ENCODE measurements at regions of chr12 and their contacts with region 1.

Region 1: GRCh38 chr12:96489103-96490056 is at the start of gene CFAP54:
- DNase-seq: peak; percentile 96
- H3K4me3 Mint-ChIP-seq: peak within 1 kb of the TSS; percentile 80
- H3K27ac Mint-ChIP-seq: peak within 1 kb of the TSS; percentile 7
- H3K4me1 Mint-ChIP-seq: peaks cover 49% of the 10 kb centered on the region
- H3K27me3 Mint-ChIP-seq: peaks cover 16% of the 10 kb centered on the region
- total RNA-seq, gene CFAP54: 0.55 to 0.75 TPM

Region 2: GRCh38 chr12:96392397-96392796 is 97.0 kb before region 1 on chr12:
- CTCF ChIA-PET with region 1: no interaction called
- POLR2A ChIA-PET with region 1: no interaction called
- DNase-seq: no peak
- H3K4me3 Mint-ChIP-seq: no peak overlapping the region
- H3K27ac Mint-ChIP-seq: no peak overlapping the region
- H3K4me1 Mint-ChIP-seq: peaks cover 39% of the 10 kb centered on the region
- H3K27me3 Mint-ChIP-seq: no peaks in the 10 kb centered on the region

Region 3: GRCh38 chr12:96445691-96446583 is 43.4 kb before region 1 on chr12:
- CTCF ChIA-PET with region 1: interaction called, 13 read pairs
- POLR2A ChIA-PET with region 1: interaction called, 9 read pairs
- DNase-seq: peak; percentile 75
- H3K4me3 Mint-ChIP-seq: peak overlapping the region; percentile 49
- H3K27ac Mint-ChIP-seq: peak overlapping the region; percentile 95
- H3K4me1 Mint-ChIP-seq: peaks cover 52% of the 10 kb centered on the region
- H3K27me3 Mint-ChIP-seq: peaks cover 3% of the 10 kb centered on the region

Region 4: GRCh38 chr12:96501139-96501761 is 11.9 kb after region 1 on chr12:
- CTCF ChIA-PET with region 1: interaction called, 29 read pairs
- POLR2A ChIA-PET with region 1: interaction called, 4 read pairs
- DNase-seq: peak; percentile 57
- H3K4me3 Mint-ChIP-seq: peak overlapping the region; percentile 25
- H3K27ac Mint-ChIP-seq: peak overlapping the region; percentile 89
- H3K4me1 Mint-ChIP-seq: peaks cover 54% of the 10 kb centered on the region
- H3K27me3 Mint-ChIP-seq: no peaks in the 10 kb centered on the region

Region 5: GRCh38 chr12:96548384-96548783 is 59.0 kb after region 1 on chr12:
- CTCF ChIA-PET with region 1: no interaction called
- POLR2A ChIA-PET with region 1: no interaction called
- DNase-seq: no peak
- H3K4me3 Mint-ChIP-seq: no peak overlapping the region
- H3K27ac Mint-ChIP-seq: no peak overlapping the region
- H3K4me1 Mint-ChIP-seq: no peaks in the 10 kb centered on the region
- H3K27me3 Mint-ChIP-seq: peaks cover 3% of the 10 kb centered on the region

Region 6: GRCh38 chr12:96882862-96883261 is 393.5 kb after region 1 on chr12:
- CTCF ChIA-PET with region 1: no interaction called
- POLR2A ChIA-PET with region 1: no interaction called
- DNase-seq: no peak
- H3K4me3 Mint-ChIP-seq: no peak overlapping the region
- H3K27ac Mint-ChIP-seq: no peak overlapping the region
- H3K4me1 Mint-ChIP-seq: no peaks in the 10 kb centered on the region
- H3K27me3 Mint-ChIP-seq: peaks cover 5% of the 10 kb centered on the region

Measured in activated CD4-positive, alpha-beta memory T cell treated with anti-CD3 and anti-CD28 coated beads, Interleukin-2, amount 10 ng/mL, durations not matched to agents 7 days and 5 days (primary cell).